Astrocyte of the cerebellum (primary cell): ENCODE measurements at regions of chr13 and their contacts with region 1.

Region 1: DNA sequence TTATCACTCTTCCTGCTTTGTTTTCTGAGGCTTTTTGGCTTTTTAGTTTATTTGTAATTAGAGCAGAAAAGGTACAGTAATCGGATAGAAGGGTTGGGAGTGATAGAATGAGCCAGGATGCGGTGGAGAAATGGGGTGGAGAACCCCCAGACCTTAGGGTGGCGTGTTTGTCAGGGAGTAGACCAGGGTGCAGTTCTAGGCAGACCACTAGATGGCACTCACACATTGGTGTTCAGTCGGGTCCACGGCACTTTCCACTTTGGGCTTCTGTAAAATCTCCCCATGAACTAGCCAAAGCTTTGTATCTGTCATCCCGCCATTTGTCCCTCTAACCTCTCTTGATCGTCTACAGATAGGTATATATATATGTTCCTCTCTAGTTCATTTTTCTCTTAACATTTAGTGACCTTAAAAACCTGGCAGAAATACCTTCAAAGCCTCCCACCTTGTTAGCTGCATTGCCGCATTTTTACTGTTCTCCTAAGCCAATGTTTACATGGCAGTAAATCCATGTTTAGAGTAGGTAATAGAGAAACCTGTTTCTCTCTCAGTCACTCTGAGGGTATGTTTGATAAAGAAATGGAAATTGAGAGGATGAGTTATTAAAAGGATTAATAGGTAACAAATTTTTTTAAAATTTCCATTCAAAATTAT is 154.9 kb downstream of the TM9SF2 start:
- DNase-seq: peak; percentile 73
- H3K4me3 ChIP-seq: no peak overlapping the region
- CTCF ChIP-seq: peak; percentile 92

Region 2: DNA sequence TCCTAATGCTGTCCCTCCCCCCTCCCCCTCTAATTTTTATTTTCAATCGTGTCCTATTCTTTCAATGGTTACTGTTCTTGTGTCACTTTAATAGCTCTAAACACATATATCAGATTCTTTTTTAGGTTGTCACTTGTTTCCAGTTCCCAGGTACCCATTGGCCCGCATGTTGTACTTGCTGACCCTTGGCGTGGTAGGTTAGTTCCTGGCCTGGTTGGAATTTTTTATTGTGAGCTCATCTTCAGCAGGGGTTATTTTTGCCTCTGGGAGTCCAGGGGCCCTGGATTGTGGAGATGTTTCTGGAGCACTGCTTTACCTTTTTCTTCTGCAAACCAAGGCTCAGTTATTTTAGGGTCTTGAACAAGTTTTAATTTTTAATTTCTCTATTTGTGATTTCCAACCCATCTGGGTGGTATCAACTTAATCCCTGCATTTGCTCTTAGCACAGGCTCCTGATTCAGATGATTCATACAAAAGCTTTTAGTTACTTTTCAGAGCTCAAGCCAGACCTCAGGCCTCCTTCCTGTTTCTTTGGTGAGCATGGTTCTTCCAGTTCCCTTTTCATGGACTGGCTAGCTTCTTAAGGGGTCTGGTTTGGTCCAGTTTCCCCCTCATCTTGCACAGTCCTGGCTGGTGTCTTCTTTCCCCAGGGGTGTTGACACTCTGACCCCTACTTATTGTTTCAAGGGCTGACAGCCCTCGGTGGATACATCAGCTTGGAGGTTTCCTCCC is 65.6 kb after region 1 on chr13:
- in situ Hi-C with region 1: no loop called
- DNase-seq: no peak
- H3K4me3 ChIP-seq: no peak overlapping the region
- CTCF ChIP-seq: no peak

Region 3: DNA sequence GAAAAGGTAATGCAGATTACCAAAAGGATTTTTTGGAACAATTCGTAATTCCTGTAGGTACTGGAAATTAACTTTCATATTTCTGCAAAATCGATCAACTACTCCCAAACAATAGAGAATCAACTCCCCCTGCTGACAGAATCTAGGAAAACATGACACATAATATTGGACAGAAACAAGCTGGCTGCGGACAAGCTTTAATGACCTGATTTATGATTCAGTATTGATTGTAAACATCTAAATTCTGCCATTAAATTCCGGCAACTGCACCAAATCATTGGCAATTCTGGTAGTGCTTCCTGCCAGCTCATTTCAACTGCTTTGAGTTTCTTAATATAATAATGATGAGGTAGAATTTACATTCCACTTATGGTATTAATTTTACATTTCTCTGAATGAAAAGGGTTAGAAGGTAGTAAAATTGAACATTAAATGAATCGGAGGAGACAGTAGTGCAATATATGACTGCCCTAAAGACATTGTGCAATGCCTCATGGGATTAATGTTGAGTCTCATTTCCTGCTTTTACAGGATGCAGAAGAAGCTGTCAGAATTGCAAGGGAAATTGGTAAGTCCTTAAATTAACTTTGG is 579.2 kb after region 1 on chr13:
- in situ Hi-C with region 1: loop called (anchors 25 kb)
- DNase-seq: peak; percentile 50
- H3K4me3 ChIP-seq: no peak overlapping the region
- CTCF ChIP-seq: peak; percentile 50